GM12878 (cell line): ENCODE measurements at regions of chr1 and their contacts with region 1.

Region 1: DNA sequence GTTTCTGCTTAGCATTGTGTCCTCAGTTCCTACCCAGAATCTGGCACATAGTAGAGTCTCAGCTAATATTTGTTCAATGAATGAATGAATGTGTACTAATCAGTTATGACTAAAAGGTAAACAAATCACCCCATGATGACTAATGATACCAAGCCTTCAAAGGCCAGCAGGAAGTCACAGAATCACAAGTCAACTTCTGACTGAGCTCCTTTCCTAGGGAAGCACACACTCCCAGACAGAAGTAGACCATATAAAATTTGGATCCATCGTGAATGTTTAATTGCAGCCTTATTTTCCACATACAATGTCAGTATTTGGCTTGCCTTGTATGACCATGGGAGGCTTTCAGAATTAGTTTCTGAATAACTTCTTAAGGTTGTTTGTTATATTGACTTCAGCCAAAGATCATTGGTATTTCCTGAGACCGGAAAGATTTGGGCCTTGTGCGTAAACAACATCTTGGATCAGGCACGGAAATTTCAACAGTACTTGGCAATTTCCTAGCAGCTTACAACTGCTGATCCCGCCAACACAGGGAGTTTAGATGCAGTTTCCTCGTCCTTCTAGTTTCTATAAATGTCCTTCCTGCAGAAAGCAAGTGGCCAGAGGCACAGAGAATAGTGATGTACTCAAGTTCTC is 185.9 kb upstream of the ATP1B1 start:
- DNase-seq: no peak
- ATAC-seq: no peak
- H3K4me3 ChIP-seq: no peak overlapping the region
- H3K27ac ChIP-seq: no peak overlapping the region
- H3K4me1 ChIP-seq: peaks cover 5% of the 10 kb centered on the region
- H3K27me3 ChIP-seq: no peaks in the 10 kb centered on the region
- CTCF ChIP-seq: no peak
- EP300 ChIP-seq: no peak
- POLR2A ChIP-seq: no peak
- RAD21 ChIP-seq: no peak

Region 2: DNA sequence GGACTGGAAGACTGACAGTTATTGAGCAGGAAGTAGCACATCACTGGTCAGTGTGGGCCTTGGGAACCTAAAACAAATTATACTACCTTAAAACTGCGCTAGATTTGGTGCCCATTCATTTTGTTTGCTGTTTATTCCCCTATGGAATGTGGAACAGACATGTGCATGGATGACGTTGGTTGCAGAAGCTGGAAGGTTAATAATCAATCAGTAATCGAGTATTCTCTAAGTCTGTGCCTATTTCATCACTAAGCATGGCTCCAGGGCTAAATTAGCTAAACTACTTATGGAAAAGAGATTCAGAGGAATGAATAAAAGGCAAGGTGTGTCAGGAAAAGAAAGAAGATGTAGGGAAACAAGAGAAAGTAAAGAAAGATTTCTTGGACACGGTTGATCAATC is 158.1 kb before region 1 on chr1:
- CTCF ChIA-PET with region 1: no interaction called
- POLR2A ChIA-PET with region 1: no interaction called
- RAD21 ChIA-PET with region 1: no interaction called
- SMC1A ChIA-PET with region 1: no interaction called
- in situ Hi-C with region 1: no loop called
- intact Hi-C with region 1: no loop called
- DNase-seq: no peak
- ATAC-seq: no peak
- H3K4me3 ChIP-seq: no peak overlapping the region
- H3K27ac ChIP-seq: no peak overlapping the region
- H3K4me1 ChIP-seq: no peaks in the 10 kb centered on the region
- H3K27me3 ChIP-seq: no peaks in the 10 kb centered on the region
- CTCF ChIP-seq: no peak
- EP300 ChIP-seq: no peak
- POLR2A ChIP-seq: no peak
- RAD21 ChIP-seq: no peak

Region 3: DNA sequence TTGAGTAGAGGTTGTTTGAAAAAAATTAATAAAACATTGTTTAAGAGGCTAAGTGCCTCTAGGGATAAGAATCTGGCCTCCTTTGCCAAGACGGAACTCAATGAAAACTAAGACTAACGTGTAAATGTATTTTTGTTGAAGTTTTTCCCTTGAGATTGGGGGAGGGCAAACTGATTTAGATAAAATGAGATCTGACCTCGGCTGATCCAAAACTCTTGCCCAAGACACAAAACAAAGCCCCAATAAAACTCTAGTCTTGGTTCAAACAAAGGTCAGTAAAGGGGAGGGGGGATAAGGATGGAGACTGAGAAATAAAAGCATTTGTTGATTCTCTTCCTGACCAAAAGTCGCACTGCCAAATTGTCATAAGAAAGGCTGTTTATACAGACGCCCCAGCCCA is 56.8 kb before region 1 on chr1:
- CTCF ChIA-PET with region 1: no interaction called
- POLR2A ChIA-PET with region 1: no interaction called
- RAD21 ChIA-PET with region 1: no interaction called
- SMC1A ChIA-PET with region 1: no interaction called
- in situ Hi-C with region 1: no loop called
- intact Hi-C with region 1: loop called (anchors 10 kb)
- DNase-seq: no peak
- ATAC-seq: no peak
- H3K4me3 ChIP-seq: no peak overlapping the region
- H3K27ac ChIP-seq: no peak overlapping the region
- H3K4me1 ChIP-seq: no peaks in the 10 kb centered on the region
- H3K27me3 ChIP-seq: no peaks in the 10 kb centered on the region
- CTCF ChIP-seq: no peak
- EP300 ChIP-seq: no peak
- POLR2A ChIP-seq: no peak
- RAD21 ChIP-seq: no peak

Region 4: DNA sequence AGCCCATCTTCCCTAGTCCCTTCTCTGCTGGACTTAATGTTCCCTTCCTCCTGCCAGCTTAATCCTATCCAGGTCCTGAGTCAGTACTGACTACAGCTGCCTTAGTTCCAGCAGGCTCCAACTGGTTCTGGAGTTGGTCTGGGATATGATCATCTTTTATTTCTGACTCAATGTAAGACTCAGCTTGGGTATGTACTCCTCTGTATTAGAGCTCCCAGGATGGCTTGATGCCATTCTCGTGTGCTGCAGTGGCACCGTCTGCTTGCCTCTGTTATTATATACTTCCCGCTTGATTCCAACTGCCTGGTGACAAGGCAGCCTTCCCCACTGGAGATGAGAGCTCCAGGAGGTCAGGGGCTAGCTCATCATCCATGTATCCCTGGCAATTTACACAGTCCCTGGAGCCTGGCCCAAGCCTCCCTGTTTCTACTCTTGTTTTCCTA is 27.2 kb before region 1 on chr1:
- CTCF ChIA-PET with region 1: no interaction called
- POLR2A ChIA-PET with region 1: no interaction called
- RAD21 ChIA-PET with region 1: no interaction called
- SMC1A ChIA-PET with region 1: no interaction called
- in situ Hi-C with region 1: no loop called
- intact Hi-C with region 1: no loop called
- DNase-seq: no peak
- ATAC-seq: no peak
- H3K4me3 ChIP-seq: no peak overlapping the region
- H3K27ac ChIP-seq: no peak overlapping the region
- H3K4me1 ChIP-seq: no peaks in the 10 kb centered on the region
- H3K27me3 ChIP-seq: no peaks in the 10 kb centered on the region
- CTCF ChIP-seq: no peak
- EP300 ChIP-seq: no peak
- POLR2A ChIP-seq: no peak
- RAD21 ChIP-seq: no peak

Region 5: GRCh38 chr1:168907053-168907452 is 13.5 kb before region 1 on chr1:
- CTCF ChIA-PET with region 1: interaction called, 8 read pairs
- POLR2A ChIA-PET with region 1: interaction called, 4 read pairs
- RAD21 ChIA-PET with region 1: interaction called, 5 read pairs
- SMC1A ChIA-PET with region 1: interaction called, 21 read pairs
- in situ Hi-C with region 1: no loop called
- intact Hi-C with region 1: no loop called
- DNase-seq: no peak
- ATAC-seq: no peak
- H3K4me3 ChIP-seq: no peak overlapping the region
- H3K27ac ChIP-seq: no peak overlapping the region
- H3K4me1 ChIP-seq: no peaks in the 10 kb centered on the region
- H3K27me3 ChIP-seq: no peaks in the 10 kb centered on the region; a peak in 1 of 4 replicates
- CTCF ChIP-seq: no peak
- EP300 ChIP-seq: no peak
- POLR2A ChIP-seq: no peak
- RAD21 ChIP-seq: no peak